ENCODE measurements at regions of chr22 and their contacts with region 1.

Region 1: GRCh38 chr22:17281440-17281841 is 62.2 kb upstream of the ADA2 start:
- DNase-seq: peak; percentile 61
- ATAC-seq: peak; percentile 85
- H3K4me3 Mint-ChIP-seq: peak overlapping the region; percentile 52
- H3K27ac Mint-ChIP-seq: peak overlapping the region; percentile 95
- H3K4me1 Mint-ChIP-seq: peaks cover 32% of the 10 kb centered on the region
- H3K27me3 Mint-ChIP-seq: peaks cover 5% of the 10 kb centered on the region

Region 2: GRCh38 chr22:17077255-17077654 is 204.2 kb before region 1 on chr22:
- CTCF ChIA-PET with region 1: no interaction called
- POLR2A ChIA-PET with region 1: no interaction called
- intact Hi-C with region 1: loop called in 1 of 2 experiments (anchors 5 kb)
- DNase-seq: no peak
- ATAC-seq: no peak
- H3K4me3 Mint-ChIP-seq: no peak overlapping the region
- H3K27ac Mint-ChIP-seq: no peak overlapping the region
- H3K4me1 Mint-ChIP-seq: peaks cover 24% of the 10 kb centered on the region
- H3K27me3 Mint-ChIP-seq: no peaks in the 10 kb centered on the region

Region 3: GRCh38 chr22:17213976-17214375 is 67.5 kb before region 1 on chr22:
- CTCF ChIA-PET with region 1: no interaction called
- POLR2A ChIA-PET with region 1: no interaction called
- intact Hi-C with region 1: no loop called
- DNase-seq: peak; percentile 74
- ATAC-seq: peak; percentile 49
- H3K4me3 Mint-ChIP-seq: no peak overlapping the region
- H3K27ac Mint-ChIP-seq: no peak overlapping the region
- H3K4me1 Mint-ChIP-seq: peaks cover 46% of the 10 kb centered on the region
- H3K27me3 Mint-ChIP-seq: no peaks in the 10 kb centered on the region

Region 4: GRCh38 chr22:17229991-17230644 is 51.3 kb before region 1 on chr22:
- CTCF ChIA-PET with region 1: no interaction called
- POLR2A ChIA-PET with region 1: interaction called, 20 read pairs
- intact Hi-C with region 1: no loop called
- DNase-seq: no peak
- ATAC-seq: no peak
- H3K4me3 Mint-ChIP-seq: no peak overlapping the region
- H3K27ac Mint-ChIP-seq: no peak overlapping the region
- H3K4me1 Mint-ChIP-seq: no peaks in the 10 kb centered on the region
- H3K27me3 Mint-ChIP-seq: no peaks in the 10 kb centered on the region

Region 5: DNA sequence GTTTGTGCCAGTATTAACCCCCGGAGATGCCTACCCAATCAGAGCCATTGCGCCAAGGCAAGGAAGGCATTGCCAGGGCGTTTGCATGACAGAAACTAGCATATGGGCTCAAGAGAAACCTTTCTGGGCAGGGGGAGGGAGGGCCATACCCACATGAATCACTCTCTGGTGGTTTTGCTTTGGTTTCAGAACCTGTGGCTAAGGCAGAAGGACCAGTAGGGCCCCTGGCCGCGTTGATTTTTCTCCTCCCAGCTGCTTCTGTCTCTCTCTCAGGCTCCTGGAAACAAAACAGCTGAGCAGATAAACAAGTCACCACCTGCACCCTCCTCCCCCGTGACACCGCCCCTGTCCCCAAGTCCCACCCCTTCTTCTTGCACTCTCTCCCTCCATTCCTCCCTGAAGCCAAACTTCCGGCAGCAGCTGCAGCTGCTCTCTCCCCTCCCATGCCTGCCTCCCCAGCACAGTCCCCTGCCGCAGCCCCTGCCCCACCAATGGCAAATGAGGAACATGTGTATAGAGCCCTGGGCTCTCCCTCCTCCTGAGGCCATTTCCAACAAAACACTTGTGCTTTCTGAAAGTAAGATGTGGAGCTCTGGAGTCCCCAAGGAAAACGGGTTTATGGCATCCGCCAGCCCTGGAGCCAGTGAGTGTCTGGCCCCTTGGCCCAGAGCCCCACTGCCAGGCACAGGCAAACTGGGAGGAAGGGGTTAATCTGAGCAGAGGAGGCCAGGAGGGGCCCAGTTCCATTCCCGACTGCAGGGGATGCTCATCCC is 23.2 kb before region 1 on chr22:
- CTCF ChIA-PET with region 1: interaction called, 5 read pairs
- POLR2A ChIA-PET with region 1: no interaction called
- intact Hi-C with region 1: loop called in 1 of 2 experiments (anchors 1 kb)
- DNase-seq: peak; percentile 79
- ATAC-seq: peak; percentile 90
- H3K4me3 Mint-ChIP-seq: no peak overlapping the region
- H3K27ac Mint-ChIP-seq: peak overlapping the region; percentile 37
- H3K4me1 Mint-ChIP-seq: peaks cover 21% of the 10 kb centered on the region
- H3K27me3 Mint-ChIP-seq: no peaks in the 10 kb centered on the region

Region 6: GRCh38 chr22:17303840-17304779 is 22.7 kb after region 1 on chr22:
- CTCF ChIA-PET with region 1: interaction called, 3 read pairs
- POLR2A ChIA-PET with region 1: no interaction called
- intact Hi-C with region 1: loop called (anchors 2 kb)
- DNase-seq: peak; percentile 80
- ATAC-seq: peak; percentile 92
- H3K4me3 Mint-ChIP-seq: peak overlapping the region; percentile 28
- H3K27ac Mint-ChIP-seq: peak overlapping the region; percentile 94
- H3K4me1 Mint-ChIP-seq: peaks cover 18% of the 10 kb centered on the region
- H3K27me3 Mint-ChIP-seq: no peaks in the 10 kb centered on the region

Region 7: DNA sequence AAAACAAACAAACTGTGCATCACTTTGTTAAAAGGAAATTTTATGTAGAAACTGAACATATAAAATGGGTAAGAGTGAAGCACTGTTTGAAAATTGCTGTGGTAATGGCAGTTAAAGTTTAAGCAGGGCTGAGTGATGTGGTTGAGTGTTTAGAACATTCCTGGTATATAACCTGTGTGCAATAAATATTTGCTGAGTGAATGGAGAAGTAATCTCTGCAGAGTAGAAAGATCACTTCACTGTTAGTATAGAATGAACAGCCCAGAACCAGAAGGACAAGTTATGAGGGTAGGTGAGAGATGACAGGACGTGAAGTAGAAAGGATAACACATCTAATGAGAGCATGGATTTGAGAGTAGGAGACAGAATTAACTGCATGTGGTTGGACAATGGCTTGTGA is 115.1 kb after region 1 on chr22:
- CTCF ChIA-PET with region 1: no interaction called
- POLR2A ChIA-PET with region 1: no interaction called
- intact Hi-C with region 1: no loop called
- DNase-seq: no peak
- ATAC-seq: no peak
- H3K4me3 Mint-ChIP-seq: no peak overlapping the region
- H3K27ac Mint-ChIP-seq: no peak overlapping the region
- H3K4me1 Mint-ChIP-seq: no peaks in the 10 kb centered on the region
- H3K27me3 Mint-ChIP-seq: peaks cover 5% of the 10 kb centered on the region

Region 8: GRCh38 chr22:17570851-17571641 is 289.6 kb after region 1 on chr22:
- CTCF ChIA-PET with region 1: no interaction called
- POLR2A ChIA-PET with region 1: no interaction called
- intact Hi-C with region 1: no loop called
- DNase-seq: no peak
- ATAC-seq: no peak
- H3K4me3 Mint-ChIP-seq: no peak overlapping the region
- H3K27ac Mint-ChIP-seq: no peak overlapping the region
- H3K4me1 Mint-ChIP-seq: no peaks in the 10 kb centered on the region
- H3K27me3 Mint-ChIP-seq: peaks cover 10% of the 10 kb centered on the region

Region 9: GRCh38 chr22:17655289-17655688 is 373.8 kb after region 1 on chr22:
- CTCF ChIA-PET with region 1: no interaction called
- POLR2A ChIA-PET with region 1: no interaction called
- intact Hi-C with region 1: no loop called
- DNase-seq: no peak
- ATAC-seq: no peak
- H3K4me3 Mint-ChIP-seq: no peak overlapping the region
- H3K27ac Mint-ChIP-seq: no peak overlapping the region
- H3K4me1 Mint-ChIP-seq: no peaks in the 10 kb centered on the region
- H3K27me3 Mint-ChIP-seq: no peaks in the 10 kb centered on the region

Measured in activated CD4-positive, alpha-beta T cell treated with anti-CD3 and anti-CD28 coated beads for 36 hours (primary cell).